ENCODE measurements at regions of chr13 and their contacts with region 1.

Region 1: DNA sequence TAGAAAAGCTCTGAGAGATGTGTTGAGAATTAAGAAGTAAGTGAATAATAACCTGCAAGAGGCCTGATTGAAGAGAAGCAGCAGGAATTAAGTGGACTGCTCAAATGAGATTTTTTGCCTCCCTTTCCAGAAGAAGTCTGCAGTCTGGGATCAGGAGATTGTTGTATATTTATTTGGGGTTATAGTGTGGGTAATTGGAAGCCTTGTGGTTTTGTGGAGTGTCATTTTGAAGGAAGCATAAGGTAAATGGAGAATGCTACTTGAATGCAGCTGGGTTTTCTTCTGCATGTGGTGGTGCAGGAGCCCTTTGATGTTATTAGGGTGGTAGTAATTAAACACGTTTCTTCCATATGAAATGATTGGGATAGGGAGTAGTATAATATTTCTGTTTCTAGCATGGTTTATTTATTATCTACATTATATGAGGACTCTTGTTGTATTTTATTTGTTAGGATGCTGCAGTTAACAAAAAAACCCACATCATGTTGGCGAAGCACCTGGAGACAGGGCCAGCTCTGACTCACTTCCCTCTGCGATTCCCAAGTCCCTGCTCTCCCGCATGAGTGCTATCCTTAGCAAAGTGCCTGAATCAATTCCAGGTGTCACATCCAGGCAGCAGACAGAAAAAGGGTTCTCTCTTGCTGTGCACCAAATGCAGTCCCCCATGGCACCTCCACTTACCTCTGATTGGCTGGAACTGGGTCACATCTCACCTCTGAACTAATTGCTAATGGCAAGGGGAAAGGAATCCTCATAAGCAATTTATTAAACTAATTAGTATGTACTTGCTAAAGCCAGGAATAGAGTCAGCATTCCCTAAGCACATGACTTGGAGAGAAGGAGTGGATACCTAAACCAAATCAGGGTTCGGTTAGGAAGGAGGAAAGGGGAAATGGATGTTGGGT is 54.8 kb downstream of the DGKH start:
- DNase-seq: no peak
- H3K4me3 ChIP-seq: no peak overlapping the region
- H3K27ac ChIP-seq: no peak overlapping the region
- H3K4me1 ChIP-seq: peaks cover 0 to 7% (median 0%) of the 10 kb centered on the region in 4 donors
- H3K27me3 ChIP-seq: no peaks in the 10 kb centered on the region
- CTCF ChIP-seq: no peak
- EP300 ChIP-seq: no peak
- POLR2A ChIP-seq: no peak

Region 2: GRCh38 chr13:41668130-41668757 is 435.0 kb before region 1 on chr13:
- in situ Hi-C with region 1: loop called (anchors 5 to 25 kb)
- intact Hi-C with region 1: no loop called
- DNase-seq: peak; percentile 28
- H3K4me3 ChIP-seq: no peak overlapping the region
- H3K27ac ChIP-seq: no peak overlapping the region
- H3K4me1 ChIP-seq: no peaks in the 10 kb centered on the region
- H3K27me3 ChIP-seq: no peaks in the 10 kb centered on the region
- CTCF ChIP-seq: peak; percentile 67 to 83 (median 72)
- EP300 ChIP-seq: no peak
- POLR2A ChIP-seq: no peak

Region 3: GRCh38 chr13:41914552-41914951 is 188.7 kb before region 1 on chr13:
- in situ Hi-C with region 1: loop called in 1 of 4 experiments (anchors 25 kb)
- intact Hi-C with region 1: loop called (anchors 5 kb)
- DNase-seq: no peak
- H3K4me3 ChIP-seq: no peak overlapping the region
- H3K27ac ChIP-seq: no peak overlapping the region
- H3K4me1 ChIP-seq: peaks cover 0 to 23% (median 10%) of the 10 kb centered on the region in 4 donors
- H3K27me3 ChIP-seq: no peaks in the 10 kb centered on the region
- CTCF ChIP-seq: no peak
- EP300 ChIP-seq: no peak
- POLR2A ChIP-seq: no peak

Region 4: GRCh38 chr13:42728507-42729180 is 625.4 kb after region 1 on chr13:
- in situ Hi-C with region 1: no loop called
- intact Hi-C with region 1: loop called (anchors 5 kb)
- DNase-seq: no peak
- H3K4me3 ChIP-seq: no peak overlapping the region
- H3K27ac ChIP-seq: no peak overlapping the region
- H3K4me1 ChIP-seq: no peaks in the 10 kb centered on the region
- H3K27me3 ChIP-seq: no peaks in the 10 kb centered on the region
- CTCF ChIP-seq: no peak
- EP300 ChIP-seq: no peak
- POLR2A ChIP-seq: no peak